A673 (cell line): ENCODE measurements at regions of chr3 and their contacts with region 1.

Region 1: GRCh38 chr3:105366326-105367062 is at the start of gene ALCAM:
- DNase-seq: peak; percentile 99
- H3K4me3 ChIP-seq: peak within 1 kb of the TSS; percentile 76
- H3K27ac ChIP-seq: peak within 1 kb of the TSS; percentile 66
- H3K4me1 ChIP-seq: peaks cover 17% of the 10 kb centered on the region
- H3K27me3 ChIP-seq: no peaks in the 10 kb centered on the region
- CTCF ChIP-seq: peak; percentile 82
- total RNA-seq, gene ALCAM: 36.8 and 45.2 TPM in 2 replicates

Region 2: DNA sequence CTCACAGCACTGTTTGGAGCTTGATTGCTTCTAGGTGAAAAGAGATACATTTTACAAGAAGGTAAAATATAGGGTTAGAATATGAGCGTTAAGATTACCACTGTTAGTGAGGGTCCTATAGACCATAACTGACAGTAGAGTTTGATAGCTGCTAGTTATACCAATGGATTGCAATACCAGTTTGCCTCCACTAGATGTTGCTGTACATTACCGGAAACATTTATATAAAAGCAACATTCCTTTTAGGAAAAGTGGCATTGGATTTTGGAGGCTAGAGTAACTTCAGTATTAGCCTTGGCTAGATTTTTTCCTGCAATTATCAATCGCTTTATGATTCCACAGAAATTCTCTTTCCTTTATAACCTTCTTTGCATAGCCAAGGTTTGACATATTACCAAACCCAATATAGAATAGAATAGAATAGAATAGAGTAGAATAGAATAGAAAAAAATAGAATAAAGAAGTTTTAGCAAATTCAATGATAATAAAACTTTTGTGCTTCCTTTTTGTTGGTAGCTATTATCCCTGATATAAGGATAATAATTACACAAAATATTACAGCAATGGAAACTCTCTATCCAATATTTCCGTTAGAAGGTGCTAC is 1093.3 kb before region 1 on chr3:
- CTCF ChIA-PET with region 1: interaction called, 3 read pairs
- POLR2A ChIA-PET with region 1: no interaction called
- intact Hi-C with region 1: loop called (anchors 5 kb)
- DNase-seq: peak; percentile 57
- H3K4me3 ChIP-seq: no peak overlapping the region
- H3K27ac ChIP-seq: no peak overlapping the region
- H3K4me1 ChIP-seq: no peaks in the 10 kb centered on the region
- H3K27me3 ChIP-seq: no peaks in the 10 kb centered on the region
- CTCF ChIP-seq: peak; percentile 81

Region 3: DNA sequence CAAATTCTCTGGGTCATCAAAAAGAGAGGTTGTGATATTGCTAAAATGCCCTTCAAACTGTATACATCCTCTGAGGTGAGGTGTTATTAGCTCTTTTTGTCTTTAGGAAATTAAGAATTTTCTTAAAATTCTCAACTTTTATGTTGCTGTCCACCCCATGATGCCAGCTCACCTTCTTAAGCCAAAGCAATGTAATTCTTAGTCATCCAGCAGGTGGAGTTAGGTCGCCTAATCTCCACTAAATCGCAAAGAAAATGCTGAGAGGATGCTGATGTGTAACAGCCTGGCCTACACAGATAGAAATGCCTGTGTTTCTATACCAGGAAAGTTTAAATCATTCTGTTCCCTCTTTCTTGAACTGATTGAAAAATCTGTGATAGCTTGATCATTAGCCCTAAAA is 769.9 kb before region 1 on chr3:
- CTCF ChIA-PET with region 1: no interaction called
- POLR2A ChIA-PET with region 1: no interaction called
- intact Hi-C with region 1: loop called (anchors 2 kb)
- DNase-seq: peak; percentile 56
- H3K4me3 ChIP-seq: no peak overlapping the region
- H3K27ac ChIP-seq: no peak overlapping the region
- H3K4me1 ChIP-seq: no peaks in the 10 kb centered on the region
- H3K27me3 ChIP-seq: no peaks in the 10 kb centered on the region
- CTCF ChIP-seq: peak; percentile 60

Region 4: GRCh38 chr3:104825116-104825515 is 541.4 kb before region 1 on chr3:
- CTCF ChIA-PET with region 1: interaction called, 10 read pairs
- POLR2A ChIA-PET with region 1: no interaction called
- intact Hi-C with region 1: no loop called
- DNase-seq: peak; percentile 28
- H3K4me3 ChIP-seq: no peak overlapping the region
- H3K27ac ChIP-seq: no peak overlapping the region
- H3K4me1 ChIP-seq: no peaks in the 10 kb centered on the region
- H3K27me3 ChIP-seq: no peaks in the 10 kb centered on the region
- CTCF ChIP-seq: no peak

Region 5: DNA sequence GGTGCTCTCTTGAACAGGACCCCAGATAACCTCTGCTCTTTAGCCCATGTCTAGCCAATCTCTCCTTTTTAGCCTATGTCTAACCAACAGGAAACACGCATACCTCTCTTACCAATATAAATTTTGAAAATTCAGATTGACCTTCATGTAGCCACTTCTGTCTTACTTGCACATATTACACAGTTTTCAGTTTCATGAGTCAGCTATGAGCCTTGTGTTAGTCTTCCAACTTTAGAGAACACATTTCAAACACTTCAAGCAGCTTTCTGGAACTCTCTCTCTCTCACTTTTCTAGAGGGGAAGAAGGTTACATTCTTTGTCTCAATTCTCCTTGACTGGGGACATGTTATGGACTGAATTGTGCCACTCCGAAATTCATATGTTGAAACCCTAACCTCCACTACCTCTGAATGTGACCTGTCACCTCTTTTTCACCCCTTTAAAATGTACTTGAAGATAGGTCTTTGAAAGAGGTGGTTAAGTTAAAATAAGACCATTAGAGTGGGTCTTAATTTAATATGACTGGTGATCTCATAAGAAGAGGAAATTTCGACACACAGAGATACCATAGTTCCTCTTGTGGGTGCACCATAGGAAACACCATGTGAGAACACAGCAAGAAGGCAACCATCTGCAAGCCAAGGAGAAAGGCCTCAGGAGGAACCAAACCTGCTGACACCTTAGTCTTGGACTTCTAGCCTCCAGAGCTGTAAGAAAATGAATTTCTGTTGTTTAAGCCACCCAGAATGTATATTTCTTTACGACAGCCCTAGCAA is 480.1 kb before region 1 on chr3:
- CTCF ChIA-PET with region 1: no interaction called
- POLR2A ChIA-PET with region 1: no interaction called
- intact Hi-C with region 1: no loop called
- DNase-seq: no peak
- H3K4me3 ChIP-seq: no peak overlapping the region
- H3K27ac ChIP-seq: no peak overlapping the region
- H3K4me1 ChIP-seq: no peaks in the 10 kb centered on the region
- H3K27me3 ChIP-seq: no peaks in the 10 kb centered on the region
- CTCF ChIP-seq: no peak

Region 6: DNA sequence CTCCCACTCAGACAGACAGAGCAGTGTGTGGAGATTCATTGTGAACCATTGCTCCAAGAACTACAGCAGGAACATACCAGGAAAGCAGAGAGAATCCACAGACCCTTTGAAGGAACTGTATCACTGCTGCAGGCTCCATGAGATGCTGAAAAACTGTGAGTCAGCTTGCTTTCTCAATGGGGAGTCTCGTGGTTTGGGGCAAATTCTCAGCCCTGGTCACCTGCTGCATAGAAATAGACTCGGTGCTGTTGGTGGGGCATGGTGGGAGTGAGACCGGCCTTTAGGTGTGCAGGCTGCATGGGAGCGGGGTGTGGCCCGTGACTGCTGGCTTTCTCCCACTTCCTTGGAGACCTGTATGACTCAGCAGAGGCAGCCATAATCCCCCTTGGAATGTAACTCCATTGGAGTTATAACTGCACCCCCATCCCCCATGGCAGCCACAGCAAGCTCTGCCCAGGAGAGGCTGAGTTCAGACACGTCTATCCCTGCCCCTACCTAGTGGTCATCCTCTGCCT is 35.9 kb after region 1 on chr3:
- CTCF ChIA-PET with region 1: interaction called, 20 read pairs
- POLR2A ChIA-PET with region 1: no interaction called
- intact Hi-C with region 1: no loop called
- DNase-seq: peak; percentile 71
- H3K4me3 ChIP-seq: no peak overlapping the region
- H3K27ac ChIP-seq: no peak overlapping the region
- H3K4me1 ChIP-seq: peaks cover 4% of the 10 kb centered on the region
- H3K27me3 ChIP-seq: no peaks in the 10 kb centered on the region
- CTCF ChIP-seq: no peak

Region 7: DNA sequence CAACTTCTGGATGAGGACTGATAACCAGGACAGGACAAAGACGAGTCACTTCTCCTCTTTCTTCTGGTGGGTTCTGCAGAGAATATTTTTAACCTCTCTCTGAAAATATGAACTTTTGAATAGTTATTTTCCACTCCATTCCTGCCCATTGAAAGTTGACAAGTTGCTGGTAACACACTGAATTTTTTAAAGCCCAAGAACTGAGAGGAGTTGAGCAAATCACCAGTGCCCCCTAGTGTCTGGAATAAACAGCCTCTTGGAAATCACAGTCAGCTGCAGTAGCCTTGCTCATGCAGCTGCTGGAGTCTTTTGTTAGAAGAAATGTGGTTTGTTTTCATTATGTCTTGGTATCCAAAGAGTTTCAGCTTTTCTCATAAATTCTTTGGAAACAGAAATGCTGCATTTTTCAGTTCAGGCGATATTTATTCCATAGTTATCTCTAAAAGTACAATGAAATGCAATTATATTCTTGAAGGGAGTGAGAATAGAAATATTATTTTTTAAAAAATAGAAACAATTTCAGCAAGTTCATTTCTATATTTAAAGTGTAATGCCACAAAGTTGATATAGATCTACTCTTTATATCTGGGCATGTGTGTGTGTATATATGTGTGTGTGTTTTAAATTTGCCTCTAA is 1243.3 kb after region 1 on chr3:
- CTCF ChIA-PET with region 1: no interaction called
- POLR2A ChIA-PET with region 1: no interaction called
- intact Hi-C with region 1: loop called (anchors 2 kb)
- DNase-seq: peak; percentile 94
- H3K4me3 ChIP-seq: no peak overlapping the region
- H3K27ac ChIP-seq: peak overlapping the region; percentile 53
- H3K4me1 ChIP-seq: peaks cover 29% of the 10 kb centered on the region
- H3K27me3 ChIP-seq: no peaks in the 10 kb centered on the region
- CTCF ChIP-seq: peak; percentile 95